Right ventricle myocardium inferior (tissue), 1 donor: ENCODE measurements at regions of chr11 and their contacts with region 1.

Region 1: GRCh38 chr11:112174789-112175598 is at the start of gene BCO2:
- DNase-seq: peak; percentile 88
- ATAC-seq: peak; percentile 96
- total RNA-seq, gene BCO2: 155 TPM

Region 2: DNA sequence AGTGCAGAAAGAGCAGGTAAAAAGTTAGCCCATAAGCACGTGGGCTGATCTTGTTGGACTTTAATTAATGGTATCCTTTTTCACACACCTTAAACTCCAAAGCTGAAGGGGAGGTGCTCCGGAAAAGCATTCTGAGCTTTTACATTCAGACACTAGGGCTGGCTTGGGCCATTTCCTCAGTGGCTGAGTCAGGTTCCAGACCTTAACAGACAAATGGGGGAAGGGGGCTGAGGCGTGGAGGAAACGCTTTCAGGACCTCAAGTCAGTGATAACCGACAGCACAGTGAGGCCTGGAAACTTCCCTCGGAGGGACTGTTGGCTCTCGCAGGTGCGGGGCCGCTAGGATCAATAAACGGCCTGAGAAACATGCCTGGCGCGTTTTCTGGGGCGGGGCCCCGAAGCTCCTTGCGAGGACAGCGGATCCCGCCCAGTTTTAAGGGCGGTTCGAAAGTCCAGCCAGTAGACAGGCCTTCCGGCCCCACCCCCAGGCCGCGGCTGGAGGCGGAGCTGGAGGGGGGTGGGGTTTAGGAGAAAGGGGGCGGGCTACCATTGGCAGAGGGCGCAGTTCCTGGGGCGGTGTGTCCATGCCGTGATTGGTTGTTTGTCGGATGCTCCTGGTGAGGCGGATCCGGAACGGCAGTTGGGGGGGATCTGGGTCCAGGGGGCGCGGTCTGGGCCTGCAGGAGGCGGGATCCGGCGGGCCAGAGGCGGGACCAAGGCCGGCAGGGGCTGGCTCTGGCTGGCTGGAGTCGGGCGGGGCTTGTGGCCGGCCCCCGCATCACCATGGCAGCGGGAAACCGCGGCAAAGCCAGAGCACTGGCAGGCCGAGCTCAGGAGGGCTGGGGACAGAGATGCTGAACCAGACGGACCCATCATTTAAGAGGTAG is 248.2 kb before region 1 on chr11:
- intact Hi-C with region 1: loop called (anchors 10 kb)
- DNase-seq: peak; percentile 98
- ATAC-seq: peak; percentile 96

Region 3: GRCh38 chr11:112050721-112051120 is 124.3 kb before region 1 on chr11:
- intact Hi-C with region 1: no loop called
- DNase-seq: no peak
- ATAC-seq: no peak

Region 4: DNA sequence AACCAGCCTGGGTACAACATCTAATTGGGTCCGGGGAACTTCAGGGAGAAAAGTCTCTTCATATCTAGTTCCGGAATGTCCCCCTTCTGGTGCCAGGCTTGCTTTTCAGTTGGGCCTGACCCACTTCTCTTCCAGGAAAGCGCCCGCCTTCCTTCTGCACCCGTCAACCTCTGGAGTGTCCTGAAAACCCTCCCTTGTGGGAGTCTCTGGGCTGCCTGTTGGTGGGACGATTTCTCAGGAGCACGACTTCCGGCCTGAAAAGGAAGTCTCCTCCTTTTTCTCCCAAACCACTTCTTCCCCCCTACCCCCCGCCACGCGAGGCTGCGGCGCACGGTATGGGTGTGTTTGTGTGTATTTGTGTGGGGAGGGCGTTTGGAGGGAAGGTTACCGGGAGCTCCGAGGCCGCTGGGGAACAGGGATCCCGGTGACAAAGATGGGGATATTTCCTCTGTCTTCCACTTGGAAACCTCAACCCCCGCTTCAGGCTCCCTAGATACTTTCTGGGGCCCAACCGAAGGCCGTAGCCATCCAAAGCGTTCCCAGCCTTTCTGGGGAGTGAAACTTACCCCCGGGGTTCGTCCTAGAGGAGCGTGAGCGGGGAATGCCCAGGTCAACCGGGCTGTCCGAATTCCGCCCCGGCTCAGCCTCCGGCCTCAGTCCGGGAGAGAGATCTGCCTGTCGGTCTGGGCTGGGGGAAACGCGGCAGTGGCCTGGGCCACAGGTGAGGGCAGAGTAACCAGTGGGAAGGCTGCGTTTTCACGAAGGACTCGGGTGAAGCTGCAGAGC is 100.8 kb before region 1 on chr11 and contains the start of gene NKAPD1:
- intact Hi-C with region 1: no loop called
- DNase-seq: peak; percentile 85
- ATAC-seq: peak; percentile 90
- total RNA-seq, gene NKAPD1: 8.1 TPM

Region 5: GRCh38 chr11:112113539-112114457 is 61.2 kb before region 1 on chr11:
- intact Hi-C with region 1: loop called (anchors 2 kb)
- DNase-seq: no peak
- ATAC-seq: no peak